ENCODE measurements at regions of chr22 and their contacts with region 1.

Region 1: GRCh38 chr22:43014869-43015676 is at the start of gene PACSIN2:
- DNase-seq: peak; percentile 100
- ATAC-seq: peak; percentile 99 to 100 (median 100)
- H3K4me3 ChIP-seq: peak within 1 kb of the TSS; percentile 54 to 92 (median 82)
- H3K27ac ChIP-seq: peak within 1 kb of the TSS; percentile 57 to 81 (median 74)
- H3K4me1 ChIP-seq: peaks cover 4 to 34% (median 16%) of the 10 kb centered on the region in 9 donors
- H3K27me3 ChIP-seq: no peaks in the 10 kb centered on the region
- CTCF ChIP-seq: no peak
- total RNA-seq, gene PACSIN2: 45.0 to 69.7 (median 57.8) TPM

Region 2: DNA sequence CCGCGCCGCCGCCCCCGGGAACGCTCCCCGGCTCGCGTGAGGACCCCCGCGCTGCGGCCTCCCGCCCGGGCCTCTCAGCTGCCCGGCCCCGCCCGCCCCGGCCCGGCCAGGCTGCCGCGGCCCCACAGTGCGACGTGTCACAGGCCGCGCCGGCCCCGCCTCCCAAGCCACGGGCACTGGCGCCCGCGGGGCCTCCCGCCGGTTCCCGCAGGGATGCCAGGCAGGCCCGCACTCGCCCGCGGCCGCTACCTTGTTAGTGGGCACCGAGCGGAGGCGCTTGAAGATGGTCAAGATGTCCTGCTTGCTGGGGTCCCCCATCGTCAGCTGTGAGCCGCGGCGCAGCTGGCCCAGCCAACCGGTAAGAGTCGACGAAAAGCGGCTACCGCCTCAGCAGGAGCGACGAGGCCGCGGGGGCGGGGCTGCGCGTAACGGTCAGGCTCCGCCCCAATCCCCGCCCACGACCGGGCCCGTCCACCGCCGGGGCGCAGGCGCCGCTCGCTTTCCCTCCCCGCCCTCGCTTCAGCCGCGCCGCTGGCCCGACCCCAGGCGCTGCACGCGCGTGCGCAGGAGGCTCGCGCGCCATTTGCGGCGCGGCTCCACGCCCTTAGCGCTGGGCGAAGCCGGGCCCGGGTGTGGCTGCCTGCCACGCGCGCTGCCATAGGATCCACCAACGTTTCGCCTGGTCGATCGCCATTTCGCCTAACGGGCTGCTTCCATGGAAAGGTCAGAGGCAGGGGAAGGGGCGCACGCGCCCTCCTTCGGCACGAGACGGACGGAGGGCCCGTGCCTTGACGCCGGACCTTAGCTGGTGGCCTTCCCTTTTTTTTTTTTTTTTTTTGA is 158.0 kb before region 1 on chr22 and contains the start of gene ARFGAP3:
- intact Hi-C with region 1: loop called in 1 of 10 experiments (anchors 5 kb)
- DNase-seq: peak; percentile 93 to 96
- ATAC-seq: peak; percentile 96 to 98 (median 97)
- H3K4me3 ChIP-seq: peak within 1 kb of the TSS; percentile 67 to 98 (median 80)
- H3K27ac ChIP-seq: peak within 1 kb of the TSS; percentile 92 to 99 (median 98)
- H3K4me1 ChIP-seq: peaks cover 9 to 39% (median 26%) of the 10 kb centered on the region in 9 donors
- H3K27me3 ChIP-seq: no peaks in the 10 kb centered on the region
- CTCF ChIP-seq: no peak
- total RNA-seq, gene ARFGAP3: 10.6 to 29.4 (median 23.2) TPM

Region 3: GRCh38 chr22:42901790-42902508 is 113.1 kb before region 1 on chr22:
- intact Hi-C with region 1: loop called in 2 of 10 experiments (anchors 5 to 10 kb)
- DNase-seq: peak; percentile 61 to 74
- ATAC-seq: peak; percentile 59 to 84 (median 76)
- H3K4me3 ChIP-seq: no peak overlapping the region
- H3K27ac ChIP-seq: peak overlapping the region in 9 of 10 donors; percentile 40 to 84 (median 69)
- H3K4me1 ChIP-seq: peaks cover 37 to 90% (median 75%) of the 10 kb centered on the region in 9 donors
- H3K27me3 ChIP-seq: no peaks in the 10 kb centered on the region
- CTCF ChIP-seq: peak in 4 of 9 donors; percentile 21 to 34 (median 31)

Region 4: GRCh38 chr22:43080616-43081015 is 65.5 kb after region 1 on chr22:
- intact Hi-C with region 1: no loop called
- DNase-seq: no peak
- ATAC-seq: no peak
- H3K4me3 ChIP-seq: no peak overlapping the region
- H3K27ac ChIP-seq: no peak overlapping the region
- H3K4me1 ChIP-seq: peaks cover 0 to 15% (median 3%) of the 10 kb centered on the region in 9 donors
- H3K27me3 ChIP-seq: no peaks in the 10 kb centered on the region
- CTCF ChIP-seq: no peak

Measured in heart right ventricle (tissue), 16 donors.